Activated B cell treated with CpG ODN at 0.5 μM for 24 hours (primary cell): ENCODE measurements at regions of chr15 and their contacts with region 1.

Region 1: GRCh38 chr15:56821721-56822425 is 88.6 kb upstream of the ZNF280D start:
- DNase-seq: no peak
- ATAC-seq: peak; percentile 68
- H3K4me3 Mint-ChIP-seq: no peak overlapping the region
- H3K27ac Mint-ChIP-seq: no peak overlapping the region
- H3K4me1 Mint-ChIP-seq: peaks cover 4% of the 10 kb centered on the region
- H3K27me3 Mint-ChIP-seq: no peaks in the 10 kb centered on the region
- CTCF ChIP-seq: peak; percentile 16

Region 2: DNA sequence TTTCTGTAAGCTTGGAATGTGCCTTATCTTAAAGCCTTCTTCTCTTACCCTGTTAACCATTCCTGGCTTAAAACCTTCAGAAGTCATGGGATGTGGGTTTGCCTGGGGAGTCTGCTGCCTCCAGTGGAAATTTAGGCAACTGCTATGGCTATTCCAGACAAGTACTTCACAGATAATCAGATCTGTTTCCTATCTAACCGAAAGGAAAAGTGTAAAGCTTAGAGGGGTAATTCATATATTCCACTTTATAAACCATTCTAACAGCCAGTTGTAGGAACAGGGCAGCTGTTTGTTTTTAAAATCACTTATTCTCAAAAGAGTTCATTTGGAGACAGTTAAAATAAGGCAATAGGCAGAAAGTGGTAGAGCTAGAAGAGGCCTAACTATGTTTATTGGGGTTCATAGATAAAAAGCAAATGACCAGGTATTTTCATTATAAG is 316.5 kb after region 1 on chr15:
- CTCF ChIA-PET with region 1: no interaction called
- POLR2A ChIA-PET with region 1: no interaction called
- intact Hi-C with region 1: loop called (anchors 2 kb)
- DNase-seq: no peak
- ATAC-seq: no peak
- H3K4me3 Mint-ChIP-seq: no peak overlapping the region
- H3K27ac Mint-ChIP-seq: no peak overlapping the region
- H3K4me1 Mint-ChIP-seq: peaks cover 22% of the 10 kb centered on the region
- H3K27me3 Mint-ChIP-seq: no peaks in the 10 kb centered on the region
- CTCF ChIP-seq: no peak